ENCODE measurements at regions of chr6 and their contacts with region 1.

Region 1: GRCh38 chr6:46011241-46012085 is 4.2 kb downstream of the CLIC5 start:
- DNase-seq: peak; percentile 63
- H3K4me3 Mint-ChIP-seq: peak overlapping the region; percentile 47
- H3K27ac Mint-ChIP-seq: peak overlapping the region; percentile 74
- H3K4me1 Mint-ChIP-seq: peaks cover 55% of the 10 kb centered on the region
- H3K27me3 Mint-ChIP-seq: peaks cover 11% of the 10 kb centered on the region

Region 2: GRCh38 chr6:44387346-44388133 is 1623.9 kb before region 1 on chr6 and contains the start of gene CDC5L:
- intact Hi-C with region 1: loop called (anchors 1 kb)
- DNase-seq: peak; percentile 93
- H3K4me3 Mint-ChIP-seq: peak within 1 kb of the TSS; percentile 97
- H3K27ac Mint-ChIP-seq: peak within 1 kb of the TSS; percentile 99
- H3K4me1 Mint-ChIP-seq: peaks cover 40% of the 10 kb centered on the region
- H3K27me3 Mint-ChIP-seq: peaks cover 3% of the 10 kb centered on the region
- total RNA-seq, gene CDC5L: 28.1 and 28.4 TPM in 2 replicates

Region 3: GRCh38 chr6:44422531-44422930 is 1588.9 kb before region 1 on chr6:
- intact Hi-C with region 1: no loop called
- DNase-seq: no peak
- H3K4me3 Mint-ChIP-seq: no peak overlapping the region
- H3K27ac Mint-ChIP-seq: no peak overlapping the region
- H3K4me1 Mint-ChIP-seq: peaks cover 4% of the 10 kb centered on the region
- H3K27me3 Mint-ChIP-seq: no peaks in the 10 kb centered on the region

Region 4: GRCh38 chr6:45772886-45773495 is 238.5 kb before region 1 on chr6:
- intact Hi-C with region 1: no loop called
- DNase-seq: no peak
- H3K4me3 Mint-ChIP-seq: no peak overlapping the region
- H3K27ac Mint-ChIP-seq: no peak overlapping the region
- H3K4me1 Mint-ChIP-seq: no peaks in the 10 kb centered on the region
- H3K27me3 Mint-ChIP-seq: peaks cover 3% of the 10 kb centered on the region

Region 5: DNA sequence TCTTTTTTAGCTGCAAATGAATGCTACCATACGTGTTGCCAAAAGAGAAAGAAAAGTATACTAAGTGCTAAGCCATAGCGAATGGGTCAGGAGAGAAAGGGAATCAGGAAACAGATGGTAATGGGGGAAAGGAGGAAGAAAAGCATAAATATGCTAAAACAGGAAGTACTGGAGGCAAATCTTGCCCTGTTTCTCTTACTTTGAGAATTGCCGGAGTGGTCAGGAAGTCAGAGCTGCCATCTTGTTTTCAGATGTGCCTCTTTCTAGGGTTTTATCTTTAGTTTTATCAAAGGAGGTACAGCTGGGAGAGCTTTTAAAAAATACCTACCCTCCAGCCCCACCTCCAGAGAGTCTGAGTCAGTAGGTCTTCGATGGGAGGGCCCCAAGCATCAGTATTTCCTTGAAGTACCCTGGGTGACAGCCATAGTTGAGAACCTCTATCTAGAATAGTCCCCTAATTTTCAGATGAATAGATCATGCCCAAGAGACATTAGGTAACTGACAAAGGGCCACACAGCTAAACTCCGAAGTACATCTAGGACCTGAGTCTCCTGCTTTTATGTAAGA is 189.1 kb before region 1 on chr6:
- intact Hi-C with region 1: loop called (anchors 5 kb)
- DNase-seq: no peak
- H3K4me3 Mint-ChIP-seq: peak overlapping the region; percentile 41
- H3K27ac Mint-ChIP-seq: peak overlapping the region; percentile 76
- H3K4me1 Mint-ChIP-seq: peaks cover 32% of the 10 kb centered on the region
- H3K27me3 Mint-ChIP-seq: no peaks in the 10 kb centered on the region

Region 6: DNA sequence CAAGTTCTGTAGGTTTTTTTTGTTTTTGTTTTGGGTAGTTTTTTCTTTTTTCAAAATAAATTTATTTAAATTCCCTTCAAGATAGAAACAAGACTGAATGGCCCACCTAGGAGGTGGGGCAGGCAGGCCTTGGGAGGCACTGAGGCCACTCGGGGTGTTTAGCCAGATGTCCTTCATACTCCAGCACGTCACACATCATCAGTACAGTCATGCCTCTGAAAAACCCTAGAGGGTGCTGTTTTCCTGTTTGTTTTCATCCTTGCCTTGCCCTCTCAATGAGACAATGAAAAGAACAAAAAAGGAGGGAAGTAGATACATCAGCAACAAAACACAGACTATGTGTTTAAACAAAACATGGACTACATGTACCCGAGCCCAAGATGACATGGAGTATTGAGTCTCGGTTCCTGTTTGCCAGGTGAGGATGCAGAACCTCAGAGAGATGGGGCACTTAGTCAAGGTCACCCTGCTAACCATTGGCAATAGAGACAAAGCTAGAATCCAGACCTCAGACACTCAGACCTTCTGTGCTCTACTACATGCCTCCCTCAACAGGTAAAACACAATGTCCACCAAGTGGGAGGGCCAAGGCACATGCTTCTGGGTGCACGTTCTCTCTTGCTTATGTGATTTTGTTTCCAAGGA is 31.0 kb after region 1 on chr6:
- intact Hi-C with region 1: loop called (anchors 2 kb)
- DNase-seq: no peak
- H3K4me3 Mint-ChIP-seq: no peak overlapping the region
- H3K27ac Mint-ChIP-seq: no peak overlapping the region
- H3K4me1 Mint-ChIP-seq: peaks cover 5% of the 10 kb centered on the region
- H3K27me3 Mint-ChIP-seq: no peaks in the 10 kb centered on the region

Region 7: DNA sequence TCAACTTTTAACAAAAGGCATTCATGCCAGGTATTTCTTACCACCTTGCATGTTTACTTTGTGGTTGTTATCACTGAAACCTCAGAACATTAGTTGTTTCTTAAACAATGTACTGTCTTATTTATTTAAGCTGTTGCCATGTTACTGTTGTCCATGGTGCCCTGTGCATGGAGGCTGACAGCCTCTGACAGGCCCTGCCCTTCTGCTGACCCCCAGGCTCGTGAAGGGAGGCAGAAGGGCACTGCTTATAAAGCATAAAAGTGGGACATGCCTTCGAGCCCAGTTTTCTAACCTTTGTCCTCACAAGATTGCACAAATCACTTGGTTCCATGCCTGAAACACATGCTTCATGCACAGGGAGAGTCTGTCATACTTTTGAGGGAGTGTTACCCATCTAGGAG is 50.8 kb after region 1 on chr6:
- intact Hi-C with region 1: no loop called
- DNase-seq: no peak
- H3K4me3 Mint-ChIP-seq: no peak overlapping the region
- H3K27ac Mint-ChIP-seq: no peak overlapping the region
- H3K4me1 Mint-ChIP-seq: no peaks in the 10 kb centered on the region
- H3K27me3 Mint-ChIP-seq: peaks cover 5% of the 10 kb centered on the region

Region 8: DNA sequence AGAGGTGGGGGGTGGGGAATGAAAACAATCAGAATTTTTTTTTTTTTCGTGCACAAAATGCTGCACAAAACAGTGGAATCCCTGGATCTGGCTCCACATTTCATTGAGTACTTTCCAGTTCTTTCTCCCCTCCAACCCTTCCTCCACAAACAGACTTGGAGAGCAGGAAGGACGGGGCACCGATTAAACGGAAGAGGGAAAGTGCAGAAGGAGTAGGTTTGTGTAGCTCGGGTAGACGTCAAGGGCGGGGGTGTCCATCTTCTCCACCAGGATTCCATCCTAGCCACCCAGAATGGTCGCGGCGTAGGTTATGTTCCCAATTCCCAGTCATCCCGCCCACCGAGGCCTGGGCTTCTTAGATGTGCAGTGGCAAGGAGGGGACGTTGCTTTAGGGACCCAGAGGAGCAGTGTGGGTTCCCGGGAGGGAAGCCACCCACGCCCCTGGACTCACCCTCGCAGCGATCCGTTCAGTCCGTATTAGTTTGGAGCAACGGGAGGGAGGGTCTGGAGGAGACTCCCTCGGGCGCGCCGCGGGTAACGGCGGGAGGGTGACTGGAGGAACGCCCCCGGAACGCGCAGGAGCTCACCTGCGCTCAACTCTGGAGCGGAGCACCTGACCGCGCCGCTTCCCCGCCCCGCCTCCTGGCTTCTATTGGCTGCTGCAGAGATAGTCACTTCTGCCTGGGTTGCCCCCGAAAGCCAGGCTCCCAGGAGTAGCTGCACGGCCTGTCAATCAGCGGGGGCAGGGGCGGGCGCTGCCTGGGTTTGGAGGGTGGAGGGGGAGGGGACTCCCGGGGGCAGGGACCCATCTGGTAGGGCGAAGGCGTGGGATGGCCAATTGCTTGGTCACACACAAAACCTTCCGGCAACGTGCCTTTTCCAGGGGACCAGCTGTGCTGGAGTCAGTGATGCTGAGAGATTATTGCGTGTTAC is 159.2 kb after region 1 on chr6 and contains the start of gene ENPP5:
- intact Hi-C with region 1: loop called (anchors 2 kb)
- DNase-seq: no peak
- H3K4me3 Mint-ChIP-seq: peak within 1 kb of the TSS; percentile 67
- H3K27ac Mint-ChIP-seq: no peak within 1 kb of the TSS
- H3K4me1 Mint-ChIP-seq: peaks cover 27% of the 10 kb centered on the region
- H3K27me3 Mint-ChIP-seq: peaks cover 71% of the 10 kb centered on the region
- total RNA-seq, gene ENPP5: not detected in 2 replicates

Region 9: GRCh38 chr6:46456297-46456696 is 444.8 kb after region 1 on chr6:
- intact Hi-C with region 1: no loop called
- DNase-seq: no peak
- H3K4me3 Mint-ChIP-seq: no peak overlapping the region
- H3K27ac Mint-ChIP-seq: no peak overlapping the region
- H3K4me1 Mint-ChIP-seq: no peaks in the 10 kb centered on the region
- H3K27me3 Mint-ChIP-seq: peaks cover 6% of the 10 kb centered on the region

Measured in activated T-helper 1 cell treated with anti-CD3 and anti-CD28 coated beads, Interleukin-12 subunit alpha, Interleukin-12 subunit beta, Interleukin-2, Interleukin-4 antibody, amounts not matched to agents 30 ng/mL and 10 ng/mL and 1 ng/mL, durations not matched to agents 14 hours and 24 hours and 36 hours (primary cell).